ENCODE measurements at regions of chr15 and their contacts with region 1.

Region 1: DNA sequence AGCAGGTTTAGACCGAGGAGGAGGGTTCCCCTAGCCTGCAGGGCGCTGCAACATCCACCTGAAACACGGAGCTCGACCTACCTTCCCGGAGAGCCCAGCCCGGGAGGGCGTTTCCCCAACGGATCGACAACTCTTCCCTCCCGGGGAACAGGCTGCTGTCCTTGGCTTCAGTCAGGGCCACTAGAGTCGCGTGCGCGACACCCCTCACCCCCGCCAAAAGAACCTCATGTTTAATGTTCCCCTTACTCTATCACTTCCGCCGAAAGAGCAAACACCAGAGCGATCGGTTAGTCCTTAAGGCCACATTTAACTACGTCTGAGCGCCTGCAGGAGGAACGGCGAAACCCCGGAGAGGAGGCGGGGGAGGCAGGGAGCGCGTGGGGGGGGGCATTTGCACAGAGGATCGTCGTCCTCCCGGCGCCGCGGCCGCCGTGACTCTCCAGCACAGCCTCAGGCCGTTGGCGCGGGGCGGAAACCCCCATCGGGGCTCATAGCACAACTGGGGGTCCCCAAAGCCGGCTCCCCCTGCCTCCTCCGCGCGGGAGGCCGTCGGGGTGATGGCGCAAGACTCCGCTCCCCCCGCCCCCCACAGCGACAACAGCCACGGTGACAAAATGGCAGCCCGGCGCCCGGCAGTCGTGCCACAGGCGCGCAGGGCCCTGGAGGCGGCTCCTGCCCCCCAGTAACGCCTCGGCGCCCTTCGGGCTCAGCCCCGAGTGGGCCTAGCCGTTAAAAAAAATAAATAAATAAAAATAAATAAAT is 3.2 kb downstream of the ANP32A start:
- H3K4me3 Mint-ChIP-seq: peak overlapping the region; percentile 96
- H3K27ac Mint-ChIP-seq: peak overlapping the region; percentile 100
- H3K4me1 Mint-ChIP-seq: peaks cover 53% of the 10 kb centered on the region
- H3K27me3 Mint-ChIP-seq: no peaks in the 10 kb centered on the region

Region 2: DNA sequence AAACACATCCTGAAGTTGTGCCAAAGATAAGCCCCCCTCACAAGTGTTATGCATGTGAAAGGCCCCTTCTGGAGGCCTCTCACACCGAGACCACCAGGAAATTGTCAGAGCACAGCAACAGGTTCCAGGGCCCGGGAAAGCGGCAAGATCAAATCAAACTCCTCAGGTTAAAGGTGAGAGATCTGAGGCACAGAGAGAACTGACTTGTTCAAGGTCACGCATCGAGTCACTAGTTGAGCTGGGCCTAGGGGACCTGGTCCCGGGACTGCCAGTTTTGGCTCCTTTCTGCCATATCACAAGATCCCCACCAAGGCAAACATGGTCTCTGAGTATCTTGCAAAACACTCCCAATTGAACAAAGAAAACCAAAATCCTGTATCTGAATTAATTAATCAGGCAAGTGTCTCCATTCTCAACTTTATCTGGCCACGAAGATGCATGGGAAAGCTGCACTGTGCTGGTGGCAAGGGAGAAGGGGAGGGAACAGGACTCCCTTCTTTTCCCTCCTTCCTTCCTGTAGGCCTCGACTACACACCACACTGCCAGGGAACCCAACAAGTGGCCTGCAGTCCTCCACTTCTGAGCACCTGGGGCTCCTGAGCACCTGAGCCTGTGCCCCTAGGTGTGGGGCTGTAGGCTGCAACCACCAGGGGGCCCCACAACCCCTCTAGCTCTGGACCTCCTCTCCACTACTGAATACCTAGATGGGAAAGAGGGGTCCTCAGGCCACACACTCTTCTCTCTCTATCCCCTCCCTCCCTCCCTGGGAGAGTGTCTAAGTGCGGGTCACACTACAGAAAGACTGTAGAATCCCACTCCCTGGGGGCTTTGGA is 34.0 kb before region 1 on chr15:
- intact Hi-C with region 1: loop called (anchors 5 kb)
- H3K4me3 Mint-ChIP-seq: no peak overlapping the region
- H3K27ac Mint-ChIP-seq: peak overlapping the region; percentile 28
- H3K4me1 Mint-ChIP-seq: peaks cover 53% of the 10 kb centered on the region
- H3K27me3 Mint-ChIP-seq: no peaks in the 10 kb centered on the region

Region 3: GRCh38 chr15:68795298-68795848 is 22.1 kb before region 1 on chr15:
- intact Hi-C with region 1: loop called (anchors 2 kb)
- H3K4me3 Mint-ChIP-seq: peak overlapping the region; percentile 64
- H3K27ac Mint-ChIP-seq: peak overlapping the region; percentile 94
- H3K4me1 Mint-ChIP-seq: peaks cover 100% of the 10 kb centered on the region
- H3K27me3 Mint-ChIP-seq: no peaks in the 10 kb centered on the region

Region 4: DNA sequence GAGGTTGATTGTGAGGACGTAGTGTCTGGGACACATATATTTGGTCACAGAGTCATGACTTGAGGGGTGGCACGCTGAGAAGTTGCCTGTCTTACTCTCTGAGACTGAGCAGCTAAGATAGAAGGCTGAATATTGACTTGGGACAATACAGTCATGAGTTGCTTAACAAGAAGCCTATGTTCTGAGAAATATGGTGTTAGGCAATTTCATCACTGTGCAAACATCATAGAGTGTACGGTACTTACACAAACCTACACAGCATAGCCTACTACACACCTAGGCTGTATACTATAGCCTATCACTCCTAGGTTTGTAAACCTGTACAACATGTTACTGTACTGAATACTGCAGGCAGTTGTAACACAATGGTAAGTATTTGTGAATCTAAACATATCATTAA is 82.5 kb after region 1 on chr15:
- intact Hi-C with region 1: no loop called
- H3K4me3 Mint-ChIP-seq: no peak overlapping the region
- H3K27ac Mint-ChIP-seq: no peak overlapping the region
- H3K4me1 Mint-ChIP-seq: no peaks in the 10 kb centered on the region
- H3K27me3 Mint-ChIP-seq: peaks cover 12% of the 10 kb centered on the region

Region 5: DNA sequence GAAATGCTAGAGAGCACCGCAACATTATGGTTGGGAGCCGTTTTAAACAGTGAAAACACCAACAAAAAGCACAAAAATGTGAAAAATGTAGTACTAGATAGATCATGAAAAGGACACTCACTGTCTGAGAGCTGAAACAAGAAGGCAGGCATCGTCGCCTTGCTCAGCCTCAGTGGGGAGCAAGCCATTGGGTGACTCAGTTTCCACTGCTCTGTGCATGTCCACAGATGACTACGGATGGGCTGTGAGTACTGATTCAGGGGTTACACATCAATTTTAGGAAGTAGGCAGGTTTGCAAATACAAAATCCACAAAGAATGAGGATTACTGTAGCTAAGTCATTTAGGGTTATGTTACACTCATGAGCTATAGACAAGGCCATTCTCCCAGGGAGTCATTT is 207.8 kb after region 1 on chr15:
- intact Hi-C with region 1: no loop called
- H3K4me3 Mint-ChIP-seq: no peak overlapping the region
- H3K27ac Mint-ChIP-seq: no peak overlapping the region
- H3K4me1 Mint-ChIP-seq: peaks cover 10% of the 10 kb centered on the region
- H3K27me3 Mint-ChIP-seq: no peaks in the 10 kb centered on the region